ENCODE measurements at regions of chr15 and their contacts with region 1.

Region 1: DNA sequence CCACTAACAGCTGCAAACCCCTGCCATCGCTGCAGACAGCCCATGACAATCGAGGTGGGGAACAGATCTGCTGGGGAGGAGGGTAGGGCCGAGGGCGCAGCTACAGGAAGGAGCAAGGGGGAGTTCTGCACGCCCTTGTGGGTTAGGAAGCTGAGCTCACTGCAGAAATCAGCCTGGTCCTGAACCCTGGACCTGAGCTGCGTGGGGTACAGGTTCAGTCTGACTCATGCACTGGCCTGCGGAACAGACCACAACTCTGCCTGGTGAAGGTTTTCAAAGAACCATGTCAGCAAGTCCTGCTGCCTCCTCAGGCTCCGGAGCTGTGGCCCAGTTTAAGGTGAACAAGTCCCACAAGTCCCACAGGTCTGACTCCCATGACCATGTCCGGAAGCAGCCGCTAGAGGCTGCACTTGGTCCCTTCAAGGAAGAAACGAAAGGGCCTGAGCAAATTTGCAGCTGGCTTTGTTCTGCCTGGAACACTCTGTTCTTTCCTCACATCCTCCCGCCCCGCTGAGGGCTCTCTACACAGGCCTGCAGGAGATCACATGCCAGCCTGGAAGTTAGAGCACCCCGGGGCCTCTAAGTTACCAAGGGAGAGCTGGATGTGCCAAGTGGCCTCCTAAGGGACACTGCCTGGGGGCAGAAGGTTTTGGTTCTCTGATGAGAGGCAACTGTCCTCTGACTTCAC is 49.4 kb upstream of the AKAP13 start:
- DNase-seq: peak; percentile 92
- H3K4me3 ChIP-seq: no peak overlapping the region
- H3K27ac ChIP-seq: peak overlapping the region; percentile 85 to 87
- H3K4me1 ChIP-seq: no peaks in the 10 kb centered on the region
- H3K27me3 ChIP-seq: no peaks in the 10 kb centered on the region
- CTCF ChIP-seq: peak; percentile 80 to 94 (median 86)
- POLR2A ChIP-seq: peak; percentile 19

Region 2: GRCh38 chr15:85284497-85284896 is 46.5 kb before region 1 on chr15:
- intact Hi-C with region 1: no loop called
- DNase-seq: no peak
- H3K4me3 ChIP-seq: no peak overlapping the region
- H3K27ac ChIP-seq: no peak overlapping the region
- H3K4me1 ChIP-seq: no peaks in the 10 kb centered on the region
- H3K27me3 ChIP-seq: no peaks in the 10 kb centered on the region
- CTCF ChIP-seq: no peak
- POLR2A ChIP-seq: no peak

Region 3: GRCh38 chr15:85296615-85297402 is 34.2 kb before region 1 on chr15:
- intact Hi-C with region 1: loop called (anchors 5 kb)
- DNase-seq: peak; percentile 76
- H3K4me3 ChIP-seq: no peak overlapping the region
- H3K27ac ChIP-seq: no peak overlapping the region
- H3K4me1 ChIP-seq: no peaks in the 10 kb centered on the region
- H3K27me3 ChIP-seq: no peaks in the 10 kb centered on the region
- CTCF ChIP-seq: peak; percentile 26 to 86 (median 75)
- POLR2A ChIP-seq: no peak

Region 4: GRCh38 chr15:85380217-85380811 is 49.3 kb after region 1 on chr15 and contains the start of gene AKAP13:
- intact Hi-C with region 1: loop called (anchors 2 kb)
- DNase-seq: peak; percentile 98
- H3K4me3 ChIP-seq: peak within 1 kb of the TSS; percentile 93 to 97
- H3K27ac ChIP-seq: peak within 1 kb of the TSS; percentile 90 to 92
- H3K4me1 ChIP-seq: no peaks in the 10 kb centered on the region
- H3K27me3 ChIP-seq: no peaks in the 10 kb centered on the region
- CTCF ChIP-seq: peak in 1 of 4 experiments; percentile 13
- POLR2A ChIP-seq: peak; percentile 89
- total RNA-seq, gene AKAP13: 102 to 195 TPM

Region 5: GRCh38 chr15:85412956-85413854 is 82.2 kb after region 1 on chr15:
- intact Hi-C with region 1: loop called (anchors 2 kb)
- DNase-seq: peak; percentile 30
- H3K4me3 ChIP-seq: no peak overlapping the region
- H3K27ac ChIP-seq: peak overlapping the region; percentile 20 to 50
- H3K4me1 ChIP-seq: no peaks in the 10 kb centered on the region
- H3K27me3 ChIP-seq: no peaks in the 10 kb centered on the region
- CTCF ChIP-seq: no peak
- POLR2A ChIP-seq: no peak

Region 6: DNA sequence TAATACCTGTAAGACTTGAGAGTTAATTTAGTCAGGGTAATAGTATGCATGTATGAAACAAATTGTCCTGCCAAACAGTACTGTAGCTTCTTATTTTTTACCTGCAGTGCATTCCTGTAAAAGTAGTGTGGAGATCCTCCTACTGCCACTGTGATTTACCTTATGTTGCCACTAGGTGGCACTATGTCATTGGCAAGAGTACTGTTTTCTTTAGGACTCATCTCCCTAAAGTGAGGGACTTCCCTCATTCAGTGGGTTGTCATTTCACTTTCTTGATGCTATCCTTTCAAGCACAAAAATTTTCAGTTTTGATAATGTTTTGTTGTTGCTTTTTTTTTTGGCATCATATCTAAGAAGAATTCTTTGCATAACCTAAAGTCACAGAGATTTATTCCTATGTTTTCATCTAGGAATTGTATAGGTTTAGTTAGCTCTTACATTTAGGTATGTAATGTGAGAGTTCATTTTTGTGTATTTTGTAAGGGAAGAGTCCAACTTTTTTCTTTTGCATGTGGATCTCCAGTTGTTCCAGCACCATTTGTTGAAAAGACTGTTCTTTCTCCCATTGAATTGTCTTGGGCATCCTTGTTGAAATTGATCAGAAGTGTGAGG is 155.0 kb after region 1 on chr15:
- intact Hi-C with region 1: loop called (anchors 5 kb)
- DNase-seq: peak; percentile 82
- H3K4me3 ChIP-seq: no peak overlapping the region
- H3K27ac ChIP-seq: no peak overlapping the region
- H3K4me1 ChIP-seq: peaks cover 2% of the 10 kb centered on the region
- H3K27me3 ChIP-seq: no peaks in the 10 kb centered on the region
- CTCF ChIP-seq: peak; percentile 54 to 79 (median 71)
- POLR2A ChIP-seq: no peak

Region 7: GRCh38 chr15:85582131-85583079 is 251.4 kb after region 1 on chr15:
- intact Hi-C with region 1: loop called (anchors 10 kb)
- DNase-seq: no peak
- H3K4me3 ChIP-seq: peak overlapping the region; percentile 5 to 14
- H3K27ac ChIP-seq: peak overlapping the region; percentile 68 to 70
- H3K4me1 ChIP-seq: no peaks in the 10 kb centered on the region
- H3K27me3 ChIP-seq: no peaks in the 10 kb centered on the region
- CTCF ChIP-seq: no peak
- POLR2A ChIP-seq: no peak

Region 8: GRCh38 chr15:85730001-85730820 is 399.2 kb after region 1 on chr15:
- intact Hi-C with region 1: loop called (anchors 5 kb)
- DNase-seq: peak; percentile 66
- H3K4me3 ChIP-seq: no peak overlapping the region
- H3K27ac ChIP-seq: peak overlapping the region in 1 of 2 donors; percentile 10
- H3K4me1 ChIP-seq: no peaks in the 10 kb centered on the region
- H3K27me3 ChIP-seq: no peaks in the 10 kb centered on the region
- CTCF ChIP-seq: peak; percentile 50 to 83 (median 81)
- POLR2A ChIP-seq: no peak

Measured in prostate gland (tissue), 2 donors.